Activated CD8-positive, alpha-beta T cell treated with anti-CD3 and anti-CD28 coated beads for 36 hours (primary cell): ENCODE measurements at regions of chr3 and their contacts with region 1.

Region 1: GRCh38 chr3:18401300-18401961 is 23.7 kb downstream of the SATB1 start:
- DNase-seq: no peak
- ATAC-seq: no peak
- H3K4me3 Mint-ChIP-seq: peak overlapping the region; percentile 66
- H3K27ac Mint-ChIP-seq: peak overlapping the region; percentile 93
- H3K4me1 Mint-ChIP-seq: peaks cover 94% of the 10 kb centered on the region
- H3K27me3 Mint-ChIP-seq: no peaks in the 10 kb centered on the region
- CTCF ChIP-seq: no peak

Region 2: DNA sequence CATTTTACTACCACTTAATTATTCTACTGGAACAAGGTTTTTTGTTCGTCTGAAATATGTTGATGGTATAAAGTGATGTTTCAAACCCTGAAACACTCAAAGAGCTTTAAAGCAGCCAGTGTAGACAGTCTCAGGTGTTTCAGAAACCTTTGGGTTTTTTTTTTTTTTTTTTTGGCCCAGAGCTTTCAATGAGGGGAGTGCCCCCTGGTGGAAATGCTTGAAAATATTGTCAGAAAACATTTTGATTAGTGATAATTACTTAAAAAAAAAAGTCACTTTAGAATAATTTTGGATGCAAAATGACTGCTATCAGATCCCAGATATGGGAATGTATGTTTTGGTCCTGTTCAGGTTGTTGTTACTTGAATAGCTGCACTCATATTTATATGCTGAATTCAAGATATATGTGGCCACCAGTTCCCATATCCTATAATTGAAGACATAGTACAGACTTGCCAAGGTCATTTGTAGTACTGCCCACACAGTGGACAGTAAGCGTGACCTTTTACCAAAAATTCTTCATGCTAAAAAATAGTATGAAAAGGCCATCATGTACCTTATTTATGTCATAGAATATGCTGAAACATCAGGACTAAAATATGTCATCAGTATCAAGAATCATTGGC is 12.2 kb before region 1 on chr3:
- CTCF ChIA-PET with region 1: interaction called, 20 read pairs
- POLR2A ChIA-PET with region 1: interaction called, 4 read pairs
- intact Hi-C with region 1: no loop called
- DNase-seq: no peak
- ATAC-seq: no peak
- H3K4me3 Mint-ChIP-seq: no peak overlapping the region
- H3K27ac Mint-ChIP-seq: peak overlapping the region; percentile 30
- H3K4me1 Mint-ChIP-seq: peaks cover 71% of the 10 kb centered on the region
- H3K27me3 Mint-ChIP-seq: no peaks in the 10 kb centered on the region
- CTCF ChIP-seq: peak; percentile 75

Region 3: GRCh38 chr3:18419232-18419631 is 17.8 kb after region 1 on chr3:
- CTCF ChIA-PET with region 1: interaction called, 5 read pairs
- POLR2A ChIA-PET with region 1: interaction called, 10 read pairs
- intact Hi-C with region 1: no loop called
- DNase-seq: no peak
- ATAC-seq: no peak
- H3K4me3 Mint-ChIP-seq: peak overlapping the region; percentile 64
- H3K27ac Mint-ChIP-seq: peak overlapping the region; percentile 79
- H3K4me1 Mint-ChIP-seq: peaks cover 86% of the 10 kb centered on the region
- H3K27me3 Mint-ChIP-seq: no peaks in the 10 kb centered on the region
- CTCF ChIP-seq: no peak